ENCODE measurements at regions of chr21 and their contacts with region 1.

Region 1: DNA sequence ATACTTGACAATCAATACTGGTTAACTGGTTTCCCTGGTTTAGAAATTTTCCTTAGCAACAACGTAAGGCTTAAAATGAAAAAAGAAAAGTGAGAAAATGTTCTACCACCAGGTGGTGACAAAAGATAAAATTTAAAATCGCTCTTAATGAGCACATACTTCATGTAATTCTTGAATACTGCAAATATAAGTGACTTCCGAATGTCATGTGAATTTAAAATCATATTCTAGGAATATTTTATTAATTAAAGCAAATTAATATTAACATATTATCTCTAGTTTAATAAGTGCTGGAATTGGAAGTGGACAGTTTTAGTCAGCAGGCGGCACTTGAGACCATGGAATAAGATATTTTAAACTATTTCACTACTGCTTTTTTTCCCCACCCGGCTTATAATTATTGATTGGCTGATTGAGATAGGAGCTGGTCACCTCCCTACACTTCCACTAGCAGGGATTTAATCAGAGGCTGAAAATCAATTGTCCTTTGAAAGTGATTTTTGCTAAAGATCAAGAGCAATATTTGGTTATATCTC is 5.0 kb upstream of the ADAMTS1 start:
- DNase-seq: peak; percentile 59
- ATAC-seq: no peak
- H3K4me3 ChIP-seq: no peak overlapping the region
- H3K27ac ChIP-seq: peak overlapping the region; percentile 33; the same call in 1 of the 2 replicates
- H3K4me1 ChIP-seq: peaks cover 8% of the 10 kb centered on the region
- H3K27me3 ChIP-seq: no peaks in the 10 kb centered on the region
- CTCF ChIP-seq: peak; percentile 58
- POLR2A ChIP-seq: no peak; the same call in 1 of the 2 replicates
- RAD21 ChIP-seq: peak; percentile 72

Region 2: GRCh38 chr21:26732432-26733221 is 117.5 kb before region 1 on chr21:
- CTCF ChIA-PET with region 1: no interaction called
- POLR2A ChIA-PET with region 1: no interaction called
- dilution Hi-C with region 1: no loop called
- in situ Hi-C with region 1: no loop called
- intact Hi-C with region 1: no loop called
- DNase-seq: peak; percentile 57
- ATAC-seq: peak; percentile 93
- H3K4me3 ChIP-seq: no peak overlapping the region
- H3K27ac ChIP-seq: no peak overlapping the region
- H3K4me1 ChIP-seq: no peaks in the 10 kb centered on the region
- H3K27me3 ChIP-seq: peaks cover 7% of the 10 kb centered on the region
- CTCF ChIP-seq: peak; percentile 66
- POLR2A ChIP-seq: no peak
- RAD21 ChIP-seq: peak; percentile 48

Region 3: GRCh38 chr21:27213303-27213702 is 363.1 kb after region 1 on chr21:
- CTCF ChIA-PET with region 1: no interaction called
- POLR2A ChIA-PET with region 1: no interaction called
- dilution Hi-C with region 1: no loop called
- in situ Hi-C with region 1: no loop called
- intact Hi-C with region 1: loop called (anchors 2 kb)
- DNase-seq: peak; percentile 36
- ATAC-seq: no peak
- H3K4me3 ChIP-seq: no peak overlapping the region
- H3K27ac ChIP-seq: no peak overlapping the region
- H3K4me1 ChIP-seq: no peaks in the 10 kb centered on the region
- H3K27me3 ChIP-seq: no peaks in the 10 kb centered on the region
- CTCF ChIP-seq: peak; percentile 40
- POLR2A ChIP-seq: no peak
- RAD21 ChIP-seq: peak; percentile 46

Region 4: GRCh38 chr21:27300770-27301169 is 450.6 kb after region 1 on chr21:
- CTCF ChIA-PET with region 1: no interaction called
- POLR2A ChIA-PET with region 1: no interaction called
- dilution Hi-C with region 1: no loop called
- in situ Hi-C with region 1: no loop called
- intact Hi-C with region 1: loop called (anchors 2 kb)
- DNase-seq: peak; percentile 89
- ATAC-seq: peak; percentile 90
- H3K4me3 ChIP-seq: no peak overlapping the region
- H3K27ac ChIP-seq: peak overlapping the region; percentile 74
- H3K4me1 ChIP-seq: peaks cover 12% of the 10 kb centered on the region
- H3K27me3 ChIP-seq: no peaks in the 10 kb centered on the region
- CTCF ChIP-seq: no peak
- POLR2A ChIP-seq: no peak
- RAD21 ChIP-seq: no peak

Region 5: GRCh38 chr21:27476696-27477095 is 626.5 kb after region 1 on chr21:
- CTCF ChIA-PET with region 1: no interaction called
- POLR2A ChIA-PET with region 1: no interaction called
- dilution Hi-C with region 1: no loop called
- in situ Hi-C with region 1: no loop called
- intact Hi-C with region 1: loop called (anchors 1 kb)
- DNase-seq: peak; percentile 62
- ATAC-seq: peak; percentile 83
- H3K4me3 ChIP-seq: no peak overlapping the region
- H3K27ac ChIP-seq: no peak overlapping the region
- H3K4me1 ChIP-seq: peaks cover 6% of the 10 kb centered on the region
- H3K27me3 ChIP-seq: no peaks in the 10 kb centered on the region
- CTCF ChIP-seq: peak; percentile 61
- POLR2A ChIP-seq: no peak
- RAD21 ChIP-seq: peak; percentile 74

Region 6: GRCh38 chr21:28793043-28793442 is 1942.9 kb after region 1 on chr21:
- CTCF ChIA-PET with region 1: no interaction called
- POLR2A ChIA-PET with region 1: no interaction called
- dilution Hi-C with region 1: no loop called
- in situ Hi-C with region 1: loop called (anchors 10 kb)
- intact Hi-C with region 1: loop called (anchors 1 kb)
- DNase-seq: peak; percentile 73
- ATAC-seq: peak; percentile 85
- H3K4me3 ChIP-seq: no peak overlapping the region
- H3K27ac ChIP-seq: no peak overlapping the region
- H3K4me1 ChIP-seq: peaks cover 9% of the 10 kb centered on the region
- H3K27me3 ChIP-seq: no peaks in the 10 kb centered on the region
- CTCF ChIP-seq: peak; percentile 75
- POLR2A ChIP-seq: no peak
- RAD21 ChIP-seq: peak; percentile 85

Measured in IMR-90 (cell line).